ENCODE measurements at regions of chr1 and their contacts with region 1.

Region 1: GRCh38 chr1:175208773-175209492 is 16.4 kb upstream of the KIAA0040 start:
- DNase-seq: peak in 8 of 9 donors; percentile 36 to 85 (median 78)
- ATAC-seq: peak; percentile 94
- H3K4me3 ChIP-seq: peak overlapping the region; percentile 41
- H3K4me3 Mint-ChIP-seq: peak overlapping the region; percentile 71 to 96 (median 88)
- H3K27ac ChIP-seq: peak overlapping the region; percentile 62
- H3K27ac Mint-ChIP-seq: peak overlapping the region; percentile 86 to 99 (median 95)
- H3K4me1 ChIP-seq: peaks cover 55 to 70% of the 10 kb centered on the region in 2 donors
- H3K4me1 Mint-ChIP-seq: peaks cover 44 to 93% (median 76%) of the 10 kb centered on the region in 7 donors
- H3K27me3 ChIP-seq: no peaks in the 10 kb centered on the region
- H3K27me3 Mint-ChIP-seq: no peaks in the 10 kb centered on the region

Region 2: DNA sequence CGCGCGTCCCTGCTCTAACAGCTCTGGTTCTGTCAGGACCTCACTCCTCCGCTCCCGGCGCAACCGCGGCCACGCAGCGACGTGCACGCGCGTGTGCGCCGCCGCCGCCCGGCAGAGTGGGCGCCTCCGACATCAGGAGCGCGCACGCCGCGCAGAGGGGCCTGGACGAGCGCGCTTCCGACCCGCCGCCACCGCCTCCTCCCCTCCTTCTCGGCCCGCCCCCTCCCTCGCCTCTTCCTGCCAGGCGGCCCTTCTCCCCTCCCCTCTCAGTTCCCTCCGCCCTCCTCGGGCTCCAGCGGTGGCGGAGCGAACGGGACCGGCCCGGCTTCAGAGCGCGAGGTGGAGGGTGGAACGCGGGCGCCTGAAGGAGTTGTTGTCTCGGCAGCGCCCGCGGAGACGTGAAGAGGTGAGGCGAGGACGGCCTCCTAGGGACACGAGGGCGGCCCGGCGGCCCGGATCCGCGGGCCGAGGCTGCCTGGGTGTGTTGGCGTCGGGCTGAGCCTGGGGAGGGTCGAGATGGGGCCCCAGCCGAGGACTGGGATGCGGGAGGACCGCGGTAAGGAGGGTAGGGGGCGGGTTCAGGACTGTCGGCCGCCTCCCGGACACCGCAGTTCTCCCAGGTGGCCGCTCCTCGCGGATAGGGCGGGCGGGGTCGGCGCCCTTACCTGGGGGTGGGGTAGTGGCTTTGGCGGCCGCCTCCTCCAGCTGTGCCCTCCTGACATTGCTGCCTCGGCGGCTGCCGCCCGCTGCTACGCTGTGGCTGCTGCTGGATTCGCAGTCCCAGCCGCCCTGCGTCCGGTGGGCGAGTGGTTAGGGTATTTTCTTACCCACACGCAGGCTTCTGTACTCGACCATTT is 1049.5 kb before region 1 on chr1 and contains the start of gene RABGAP1L:
- CTCF ChIA-PET with region 1: no interaction called
- POLR2A ChIA-PET with region 1: no interaction called
- intact Hi-C with region 1: loop called in 1 of 2 experiments (anchors 10 kb)
- DNase-seq: peak; percentile 87 to 95 (median 93)
- ATAC-seq: peak; percentile 96
- H3K4me3 ChIP-seq: peak within 1 kb of the TSS; percentile 72
- H3K4me3 Mint-ChIP-seq: peak within 1 kb of the TSS; percentile 92 to 100 (median 96)
- H3K27ac ChIP-seq: peak within 1 kb of the TSS; percentile 87
- H3K27ac Mint-ChIP-seq: peak within 1 kb of the TSS; percentile 86 to 98 (median 98)
- H3K4me1 ChIP-seq: peaks cover 9 to 20% of the 10 kb centered on the region in 2 donors
- H3K4me1 Mint-ChIP-seq: peaks cover 31 to 59% (median 53%) of the 10 kb centered on the region in 7 donors
- H3K27me3 ChIP-seq: no peaks in the 10 kb centered on the region
- H3K27me3 Mint-ChIP-seq: no peaks in the 10 kb centered on the region
- total RNA-seq, gene RABGAP1L: 51.9 to 97.4 (median 74.3) TPM

Region 3: DNA sequence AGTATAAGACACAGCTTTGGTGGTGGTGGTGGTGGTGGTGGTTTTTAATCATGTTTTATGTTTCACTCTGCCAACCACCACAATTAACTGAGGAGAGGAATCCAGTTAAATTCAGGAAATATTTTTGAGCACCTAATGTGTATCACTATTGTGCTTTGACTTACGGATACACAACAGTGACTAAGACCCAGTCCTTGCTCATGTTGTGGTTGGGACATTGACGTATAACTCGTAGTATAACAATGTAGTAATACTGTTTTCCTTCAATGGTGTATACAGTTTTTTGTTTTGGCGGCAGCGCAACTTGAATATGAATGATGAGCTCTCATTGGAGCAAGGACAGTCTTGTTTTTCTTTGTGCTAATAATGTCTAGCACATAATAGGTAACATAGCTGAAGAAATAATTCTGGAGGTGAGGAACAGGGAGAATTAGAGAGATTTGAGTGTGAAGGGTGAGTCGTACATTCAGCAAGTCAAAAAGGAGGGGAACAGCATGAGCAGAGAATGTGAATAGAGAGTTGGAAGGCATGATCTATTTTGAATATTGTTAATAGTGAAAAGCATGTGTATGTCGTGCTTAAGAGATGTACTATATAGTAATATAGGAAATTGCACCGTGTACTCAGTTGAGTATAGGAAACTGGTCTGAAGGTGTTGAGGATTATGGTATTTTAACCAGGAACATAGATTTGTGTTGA is 203.7 kb before region 1 on chr1:
- CTCF ChIA-PET with region 1: no interaction called
- POLR2A ChIA-PET with region 1: no interaction called
- intact Hi-C with region 1: no loop called
- DNase-seq: no peak
- ATAC-seq: no peak
- H3K4me3 ChIP-seq: no peak overlapping the region
- H3K4me3 Mint-ChIP-seq: no peak overlapping the region
- H3K27ac ChIP-seq: no peak overlapping the region
- H3K27ac Mint-ChIP-seq: peak overlapping the region in 6 of 9 donors; percentile 0 to 75 (median 24)
- H3K4me1 ChIP-seq: peaks cover 3 to 10% of the 10 kb centered on the region in 2 donors
- H3K4me1 Mint-ChIP-seq: peaks cover 42 to 65% (median 55%) of the 10 kb centered on the region in 7 donors
- H3K27me3 ChIP-seq: no peaks in the 10 kb centered on the region
- H3K27me3 Mint-ChIP-seq: no peaks in the 10 kb centered on the region

Region 4: DNA sequence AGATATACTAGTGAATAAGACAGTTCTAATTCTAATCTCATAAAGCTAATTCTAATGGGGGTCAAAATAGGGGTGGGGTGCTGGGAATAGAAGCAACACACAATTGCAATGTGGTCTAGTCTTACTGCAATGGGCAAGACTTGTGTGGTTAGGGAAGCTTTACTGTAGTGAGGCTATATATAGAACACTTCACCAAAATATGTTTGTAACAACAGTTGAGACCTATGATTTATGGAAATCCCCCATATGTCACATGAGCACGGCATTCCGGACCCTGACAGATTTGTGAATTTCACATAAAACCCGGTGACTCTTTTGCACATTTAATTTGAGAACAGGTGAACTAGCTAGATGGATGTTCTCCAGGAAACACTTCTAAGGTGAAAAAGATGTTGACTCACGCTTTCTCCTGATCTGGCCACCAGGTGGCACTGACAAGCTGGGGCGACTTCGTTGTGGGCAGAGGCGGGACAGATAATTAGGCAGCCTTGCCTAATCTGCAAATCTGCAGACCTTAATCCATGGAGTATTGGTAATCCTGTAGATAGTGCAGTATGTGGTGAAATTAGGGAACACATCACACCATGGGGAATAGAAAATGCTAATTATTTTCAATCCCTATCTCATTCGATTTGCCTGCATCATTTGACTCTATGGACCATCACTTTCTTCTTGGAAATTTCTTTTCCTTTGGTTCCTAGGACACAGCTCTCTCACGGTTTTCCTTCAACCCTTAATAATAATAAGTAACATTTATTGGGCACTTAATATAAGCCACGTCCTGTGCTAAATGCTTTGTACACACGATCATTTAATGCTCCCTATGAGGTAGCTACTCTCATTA is 54.1 kb before region 1 on chr1:
- CTCF ChIA-PET with region 1: interaction called, 20 read pairs
- POLR2A ChIA-PET with region 1: no interaction called
- intact Hi-C with region 1: loop called (anchors 1 kb)
- DNase-seq: peak; percentile 32 to 77 (median 63)
- ATAC-seq: peak; percentile 78
- H3K4me3 ChIP-seq: no peak overlapping the region
- H3K4me3 Mint-ChIP-seq: peak overlapping the region in 1 of 10 donors; percentile 7
- H3K27ac ChIP-seq: no peak overlapping the region
- H3K27ac Mint-ChIP-seq: no peak overlapping the region
- H3K4me1 ChIP-seq: peaks cover 0 to 9% of the 10 kb centered on the region in 2 donors
- H3K4me1 Mint-ChIP-seq: peaks cover 8 to 34% (median 20%) of the 10 kb centered on the region in 7 donors
- H3K27me3 ChIP-seq: no peaks in the 10 kb centered on the region
- H3K27me3 Mint-ChIP-seq: peaks cover 26 to 40% (median 38%) of the 10 kb centered on the region in 5 donors

Region 5: GRCh38 chr1:175186433-175187142 is 22.3 kb before region 1 on chr1:
- CTCF ChIA-PET with region 1: interaction called, 12 read pairs
- POLR2A ChIA-PET with region 1: interaction called, 42 read pairs
- intact Hi-C with region 1: loop called (anchors 1 kb)
- DNase-seq: no peak
- ATAC-seq: no peak
- H3K4me3 ChIP-seq: no peak overlapping the region
- H3K4me3 Mint-ChIP-seq: peak overlapping the region; percentile 12 to 96 (median 51)
- H3K27ac ChIP-seq: no peak overlapping the region
- H3K27ac Mint-ChIP-seq: peak overlapping the region; percentile 19 to 94 (median 73)
- H3K4me1 ChIP-seq: peaks cover 83 to 92% of the 10 kb centered on the region in 2 donors
- H3K4me1 Mint-ChIP-seq: peaks cover 77 to 100% (median 98%) of the 10 kb centered on the region in 7 donors
- H3K27me3 ChIP-seq: no peaks in the 10 kb centered on the region
- H3K27me3 Mint-ChIP-seq: no peaks in the 10 kb centered on the region

Region 6: DNA sequence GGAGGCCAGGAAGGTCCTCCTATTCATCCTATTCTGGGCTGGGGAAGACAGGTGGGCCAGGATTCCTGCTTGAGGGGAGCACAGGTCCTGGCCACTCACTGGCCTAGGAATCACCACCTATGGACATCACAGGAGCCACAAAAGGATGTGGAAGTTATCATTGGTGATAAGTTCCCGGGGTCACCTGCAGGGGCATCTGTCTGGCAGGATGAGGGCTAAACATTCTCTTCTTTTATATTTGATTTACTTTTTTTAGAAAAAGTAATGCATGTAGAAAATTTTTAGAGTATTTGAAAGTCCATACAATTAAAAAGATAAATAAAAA is 16.8 kb after region 1 on chr1:
- CTCF ChIA-PET with region 1: no interaction called
- POLR2A ChIA-PET with region 1: no interaction called
- intact Hi-C with region 1: loop called in 1 of 2 experiments (anchors 1 kb)
- DNase-seq: no peak
- ATAC-seq: no peak
- H3K4me3 ChIP-seq: no peak overlapping the region
- H3K4me3 Mint-ChIP-seq: no peak overlapping the region
- H3K27ac ChIP-seq: no peak overlapping the region
- H3K27ac Mint-ChIP-seq: no peak overlapping the region
- H3K4me1 ChIP-seq: no peaks in the 10 kb centered on the region
- H3K4me1 Mint-ChIP-seq: peaks cover 0 to 3% (median 0%) of the 10 kb centered on the region in 7 donors
- H3K27me3 ChIP-seq: no peaks in the 10 kb centered on the region
- H3K27me3 Mint-ChIP-seq: no peaks in the 10 kb centered on the region

Region 7: DNA sequence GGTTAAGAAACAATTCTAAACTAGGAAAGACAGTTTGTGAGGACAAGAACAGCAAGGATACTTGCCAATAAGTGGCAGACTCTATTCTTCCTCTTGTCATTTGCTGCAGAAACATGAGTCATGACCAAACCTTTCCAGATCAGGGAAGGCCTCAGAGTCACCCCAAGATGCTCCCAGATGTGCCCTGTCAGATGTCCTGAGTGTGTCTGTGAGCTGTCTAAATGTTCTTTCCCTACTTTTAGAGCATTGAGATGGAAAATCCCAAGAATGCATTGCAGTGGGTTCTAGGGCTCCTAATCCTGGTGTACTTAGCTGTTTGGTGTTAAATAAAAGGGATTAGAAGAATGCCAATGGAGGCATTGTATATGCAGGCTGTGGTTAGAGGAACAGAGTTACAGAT is 41.1 kb after region 1 on chr1:
- CTCF ChIA-PET with region 1: no interaction called
- POLR2A ChIA-PET with region 1: no interaction called
- intact Hi-C with region 1: no loop called
- DNase-seq: no peak
- ATAC-seq: no peak
- H3K4me3 ChIP-seq: no peak overlapping the region
- H3K4me3 Mint-ChIP-seq: no peak overlapping the region
- H3K27ac ChIP-seq: no peak overlapping the region
- H3K27ac Mint-ChIP-seq: no peak overlapping the region
- H3K4me1 ChIP-seq: no peaks in the 10 kb centered on the region
- H3K4me1 Mint-ChIP-seq: peaks cover 0 to 5% (median 0%) of the 10 kb centered on the region in 7 donors
- H3K27me3 ChIP-seq: no peaks in the 10 kb centered on the region
- H3K27me3 Mint-ChIP-seq: peaks cover 0 to 13% (median 0%) of the 10 kb centered on the region in 5 donors

Region 8: DNA sequence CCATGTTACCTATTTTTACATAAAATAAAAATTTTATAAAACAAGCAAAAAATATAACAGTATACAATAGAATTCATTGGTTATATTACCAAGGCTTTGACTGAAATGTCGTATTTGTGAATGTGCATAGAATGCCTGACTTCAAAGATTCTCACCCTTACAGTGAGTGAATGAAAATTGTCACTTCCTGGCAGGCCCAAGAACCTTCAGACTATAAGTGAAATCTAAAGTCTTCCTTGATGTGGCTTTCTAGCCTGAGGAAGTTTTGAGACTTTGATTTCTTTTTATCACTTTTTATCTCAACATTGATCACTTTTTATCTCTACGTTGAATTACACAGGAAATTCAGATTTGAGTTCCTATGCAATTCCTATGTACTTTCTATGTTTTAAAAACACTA is 88.4 kb after region 1 on chr1:
- CTCF ChIA-PET with region 1: no interaction called
- POLR2A ChIA-PET with region 1: no interaction called
- intact Hi-C with region 1: loop called in 1 of 2 experiments (anchors 1 kb)
- DNase-seq: peak in 7 of 9 donors; percentile 39 to 76 (median 68)
- ATAC-seq: peak; percentile 91
- H3K4me3 ChIP-seq: no peak overlapping the region
- H3K4me3 Mint-ChIP-seq: peak overlapping the region in 7 of 10 donors; percentile 32 to 67 (median 46)
- H3K27ac ChIP-seq: no peak overlapping the region
- H3K27ac Mint-ChIP-seq: no peak overlapping the region
- H3K4me1 ChIP-seq: peaks cover 5 to 29% of the 10 kb centered on the region in 2 donors
- H3K4me1 Mint-ChIP-seq: peaks cover 11 to 53% (median 42%) of the 10 kb centered on the region in 7 donors
- H3K27me3 ChIP-seq: no peaks in the 10 kb centered on the region
- H3K27me3 Mint-ChIP-seq: peaks cover 10 to 32% (median 14%) of the 10 kb centered on the region in 5 donors

Region 9: DNA sequence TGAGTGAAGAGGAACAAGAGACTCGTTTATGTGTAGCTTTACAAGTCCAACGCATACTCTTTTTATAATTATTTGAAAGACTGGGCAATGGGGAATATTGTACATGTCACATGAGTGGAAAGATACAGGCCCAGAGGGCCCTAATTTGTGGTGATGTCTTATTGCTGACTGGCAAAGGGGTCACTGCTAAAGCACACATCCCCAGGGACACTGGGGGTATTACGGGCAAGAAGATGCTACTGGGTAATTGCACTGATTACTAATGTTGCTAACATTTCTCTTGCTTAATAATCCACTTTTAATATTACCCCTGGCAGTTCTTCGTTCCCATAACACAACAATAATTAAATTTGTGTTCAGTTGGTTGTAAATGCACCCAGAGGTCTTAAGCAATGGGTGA is 104.0 kb after region 1 on chr1:
- CTCF ChIA-PET with region 1: no interaction called
- POLR2A ChIA-PET with region 1: no interaction called
- intact Hi-C with region 1: no loop called
- DNase-seq: no peak
- ATAC-seq: no peak
- H3K4me3 ChIP-seq: no peak overlapping the region
- H3K4me3 Mint-ChIP-seq: no peak overlapping the region
- H3K27ac ChIP-seq: no peak overlapping the region
- H3K27ac Mint-ChIP-seq: no peak overlapping the region
- H3K4me1 ChIP-seq: no peaks in the 10 kb centered on the region
- H3K4me1 Mint-ChIP-seq: peaks cover 0 to 6% (median 0%) of the 10 kb centered on the region in 7 donors
- H3K27me3 ChIP-seq: no peaks in the 10 kb centered on the region
- H3K27me3 Mint-ChIP-seq: peaks cover 0 to 48% (median 5%) of the 10 kb centered on the region in 5 donors

Region 10: DNA sequence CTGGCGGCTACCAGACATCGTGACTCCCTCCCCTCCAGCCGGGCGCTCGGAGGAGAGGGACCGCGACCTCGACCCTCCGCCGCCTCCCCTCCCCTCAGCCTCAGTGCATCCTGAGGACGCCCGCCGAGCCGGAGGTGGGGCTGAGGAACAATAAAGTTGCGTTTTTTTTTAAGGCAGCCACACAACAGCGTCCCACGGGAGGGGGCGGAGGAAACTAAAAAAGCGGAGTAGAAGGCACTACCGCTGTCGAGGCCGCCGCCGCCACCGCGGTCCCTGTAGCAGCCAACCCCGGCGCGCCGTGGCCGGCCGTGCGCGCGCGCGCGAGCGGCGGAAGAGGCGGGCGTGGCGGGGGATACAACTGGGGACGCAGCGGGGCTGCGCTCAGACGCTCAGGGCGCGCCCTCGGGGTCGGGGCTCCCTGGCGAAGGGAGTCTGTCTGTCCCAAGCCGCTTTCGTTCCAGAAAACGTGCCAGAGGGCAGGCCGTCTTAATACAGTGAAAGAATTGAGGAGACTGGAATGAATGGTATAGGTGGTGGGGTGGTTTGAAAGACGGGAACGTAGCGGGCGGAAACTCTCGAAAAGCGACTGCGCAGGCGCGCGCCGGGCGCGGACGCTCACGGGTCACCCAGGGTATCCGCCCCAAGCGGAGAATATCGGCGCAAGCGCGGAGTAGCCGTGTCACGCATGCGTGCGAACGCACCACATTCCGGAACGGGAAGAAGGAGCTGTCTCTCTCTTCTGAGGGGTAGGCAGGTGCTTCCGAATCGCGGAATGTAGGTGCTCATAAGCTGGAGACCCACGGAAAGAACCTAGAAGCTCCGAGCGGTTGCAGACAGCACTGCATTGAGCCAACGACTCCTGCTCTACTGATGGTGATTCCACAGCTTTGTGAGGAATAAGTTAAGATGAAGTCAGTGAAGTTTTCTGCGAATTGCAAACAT is 998.3 kb after region 1 on chr1 and contains the start of gene COP1:
- CTCF ChIA-PET with region 1: no interaction called
- POLR2A ChIA-PET with region 1: no interaction called
- intact Hi-C with region 1: loop called in 1 of 2 experiments (anchors 1 kb)
- DNase-seq: peak; percentile 89 to 97 (median 96)
- ATAC-seq: peak; percentile 91
- H3K4me3 ChIP-seq: peak within 1 kb of the TSS; percentile 90
- H3K4me3 Mint-ChIP-seq: peak within 1 kb of the TSS; percentile 81 to 100 (median 98)
- H3K27ac ChIP-seq: peak within 1 kb of the TSS; percentile 81
- H3K27ac Mint-ChIP-seq: peak within 1 kb of the TSS; percentile 93 to 100 (median 97)
- H3K4me1 ChIP-seq: peaks cover 10 to 24% of the 10 kb centered on the region in 2 donors
- H3K4me1 Mint-ChIP-seq: peaks cover 20 to 56% (median 47%) of the 10 kb centered on the region in 7 donors
- H3K27me3 ChIP-seq: no peaks in the 10 kb centered on the region
- H3K27me3 Mint-ChIP-seq: peaks cover 0 to 3% (median 0%) of the 10 kb centered on the region in 5 donors
- total RNA-seq, gene COP1: 39.1 to 57.0 (median 43.9) TPM

Measured in naive thymus-derived CD4-positive, alpha-beta T cell (primary cell).